Heart right ventricle (tissue), 16 donors: ENCODE measurements at regions of chr10 and their contacts with region 1.

Region 1: DNA sequence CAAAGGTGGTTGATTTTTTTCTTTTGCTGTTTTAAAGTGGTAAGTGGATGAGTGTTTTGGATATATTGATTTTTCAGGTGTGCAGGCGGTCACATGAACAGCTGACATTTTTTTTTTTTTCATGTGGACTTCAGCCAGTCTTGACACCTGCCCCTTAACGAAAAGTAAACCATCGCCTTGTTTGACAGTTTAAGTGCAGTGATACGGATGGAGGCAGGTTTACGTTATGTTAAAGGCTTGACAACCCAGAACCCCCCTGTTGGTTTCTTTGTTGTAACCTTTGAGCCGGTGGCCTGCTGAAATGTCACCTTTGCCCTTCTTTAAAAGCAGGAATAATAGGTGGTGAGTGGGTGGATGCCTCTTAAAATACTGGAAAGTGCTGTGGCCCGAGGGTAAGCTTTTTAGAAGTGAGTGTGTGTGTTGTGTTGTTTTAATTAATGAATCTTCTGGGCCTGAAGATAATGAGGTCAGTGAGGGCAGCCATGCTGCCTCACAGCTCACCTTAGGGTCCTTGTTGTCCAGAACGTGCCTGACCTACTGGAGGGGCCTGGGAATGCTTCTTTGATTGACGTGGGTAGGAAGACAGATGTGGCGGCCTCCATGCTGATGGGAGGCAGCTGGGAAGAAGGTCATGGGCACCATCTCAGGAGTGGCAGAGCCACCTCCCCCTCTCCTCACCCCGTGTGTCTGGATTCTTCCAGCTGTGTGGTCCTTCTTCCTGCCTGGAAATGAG is 69.8 kb downstream of the TCF7L2 start:
- DNase-seq: no peak
- ATAC-seq: no peak
- H3K4me3 ChIP-seq: no peak overlapping the region
- H3K27ac ChIP-seq: no peak overlapping the region
- H3K4me1 ChIP-seq: peaks cover 6 to 80% (median 54%) of the 10 kb centered on the region in 9 donors
- H3K27me3 ChIP-seq: no peaks in the 10 kb centered on the region
- CTCF ChIP-seq: no peak

Region 2: GRCh38 chr10:112938808-112939482 is 80.9 kb before region 1 on chr10:
- intact Hi-C with region 1: no loop called
- DNase-seq: no peak
- ATAC-seq: no peak
- H3K4me3 ChIP-seq: no peak overlapping the region
- H3K27ac ChIP-seq: no peak overlapping the region
- H3K4me1 ChIP-seq: no peaks in the 10 kb centered on the region
- H3K27me3 ChIP-seq: no peaks in the 10 kb centered on the region
- CTCF ChIP-seq: no peak

Region 3: GRCh38 chr10:113052076-113052830 is 32.4 kb after region 1 on chr10:
- intact Hi-C with region 1: loop called in 1 of 10 experiments (anchors 2 kb)
- DNase-seq: no peak
- ATAC-seq: peak in 4 of 8 donors; percentile 2 to 41 (median 26)
- H3K4me3 ChIP-seq: no peak overlapping the region
- H3K27ac ChIP-seq: peak overlapping the region in 1 of 10 donors; percentile 1
- H3K4me1 ChIP-seq: peaks cover 0 to 78% (median 45%) of the 10 kb centered on the region in 9 donors
- H3K27me3 ChIP-seq: no peaks in the 10 kb centered on the region
- CTCF ChIP-seq: peak in 8 of 9 donors; percentile 14 to 46 (median 26)

Region 4: GRCh38 chr10:113247050-113247790 is 227.4 kb after region 1 on chr10:
- intact Hi-C with region 1: no loop called
- DNase-seq: no peak
- ATAC-seq: no peak
- H3K4me3 ChIP-seq: no peak overlapping the region
- H3K27ac ChIP-seq: no peak overlapping the region
- H3K4me1 ChIP-seq: no peaks in the 10 kb centered on the region
- H3K27me3 ChIP-seq: peaks cover 0 to 3% (median 0%) of the 10 kb centered on the region in 7 donors
- CTCF ChIP-seq: no peak

Region 5: DNA sequence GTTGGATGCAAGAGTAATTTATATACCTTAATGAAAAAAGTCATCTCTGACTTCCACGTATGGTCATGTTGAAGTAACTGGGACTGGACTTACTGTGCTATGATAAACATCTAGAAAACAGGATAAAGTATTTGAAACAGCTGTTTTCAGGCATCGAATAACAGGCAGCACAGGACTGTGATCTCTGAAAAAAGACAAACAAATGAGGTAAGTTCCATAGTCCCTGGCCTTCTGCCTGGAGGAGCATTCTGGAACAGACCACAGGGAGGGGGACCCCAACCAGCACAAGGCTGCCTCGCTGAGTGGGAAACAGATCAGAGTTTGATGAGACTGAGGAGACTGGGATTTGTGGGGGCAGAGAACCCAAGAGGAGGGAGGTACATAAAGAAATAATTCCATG is 443.9 kb after region 1 on chr10:
- intact Hi-C with region 1: no loop called
- DNase-seq: no peak
- ATAC-seq: peak in 1 of 8 donors; percentile 35
- H3K4me3 ChIP-seq: no peak overlapping the region
- H3K27ac ChIP-seq: no peak overlapping the region
- H3K4me1 ChIP-seq: no peaks in the 10 kb centered on the region
- H3K27me3 ChIP-seq: peaks cover 0 to 10% (median 3%) of the 10 kb centered on the region in 7 donors
- CTCF ChIP-seq: no peak